ENCODE measurements at regions of chr12 and their contacts with region 1.

Region 1: GRCh38 chr12:25436203-25437030 is 116.7 kb downstream of the LMNTD1 start:
- DNase-seq: peak in 3 of 10 donors; percentile 18 to 75 (median 22)

Region 2: GRCh38 chr12:25557830-25558436 is 121.5 kb after region 1 on chr12:
- intact Hi-C with region 1: loop called (anchors 10 kb)
- DNase-seq: no peak

Region 3: DNA sequence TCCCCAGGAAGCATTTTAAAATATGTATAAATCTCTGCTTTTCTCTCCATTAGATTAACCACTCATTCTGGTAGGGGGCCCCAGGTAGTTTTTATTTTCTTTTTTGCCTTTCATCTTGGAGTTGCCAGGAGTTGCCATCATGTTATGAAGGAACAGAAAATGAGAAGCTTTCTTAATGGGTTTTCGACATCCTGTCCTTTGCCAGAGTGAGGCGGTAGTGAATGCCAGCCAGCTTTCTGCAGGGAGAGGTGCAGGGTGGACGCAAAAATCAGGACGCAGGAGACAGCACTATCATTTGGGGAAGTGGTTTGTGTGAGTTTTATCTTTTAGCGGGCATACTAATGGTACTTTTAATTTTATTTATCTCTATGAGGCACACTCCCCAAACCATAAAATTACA is 523.7 kb after region 1 on chr12:
- intact Hi-C with region 1: loop called (anchors 5 kb)
- DNase-seq: peak in 4 of 10 donors; percentile 19 to 83 (median 40)

Region 4: DNA sequence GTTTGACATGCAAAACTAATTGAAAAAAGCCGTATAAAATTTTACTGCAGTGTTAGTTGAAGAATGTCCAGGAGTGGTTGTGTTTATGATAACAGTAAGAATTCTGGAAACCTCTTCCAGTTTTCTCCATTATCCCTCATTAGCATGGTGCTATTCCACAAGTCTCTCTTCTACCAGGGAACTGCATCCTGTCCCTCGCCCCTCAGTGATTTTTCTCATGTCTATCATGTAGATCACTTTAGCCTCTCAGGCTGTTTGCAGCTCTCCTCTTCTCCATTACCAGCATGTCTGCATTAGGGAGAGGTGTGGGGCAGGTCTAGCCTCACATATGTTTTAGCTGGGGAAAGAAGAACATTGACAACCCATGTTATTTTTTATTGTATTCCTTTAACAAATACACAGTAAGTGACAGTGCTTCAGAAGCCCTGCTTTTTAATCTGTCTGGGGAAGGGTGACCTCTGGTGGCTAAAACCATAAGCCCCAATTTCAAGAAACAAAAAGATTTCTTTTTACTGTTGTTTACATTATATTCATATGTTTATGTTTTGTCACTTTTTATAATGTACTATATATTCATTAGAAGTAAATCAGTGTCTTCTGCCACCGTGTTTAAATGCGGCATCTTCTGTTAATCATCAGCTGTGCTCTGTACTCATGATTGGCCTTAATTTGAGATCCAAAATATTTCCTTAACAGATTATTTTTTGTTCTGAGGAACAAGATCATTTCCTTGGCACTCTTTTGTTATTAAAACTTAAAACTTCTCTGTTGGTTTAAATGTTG is 592.7 kb after region 1 on chr12:
- intact Hi-C with region 1: loop called (anchors 1 kb)
- DNase-seq: peak in 3 of 10 donors; percentile 17 to 46 (median 23)